Mammary epithelial cell (primary cell): ENCODE measurements at regions of chr18 and their contacts with region 1.

Region 1: DNA sequence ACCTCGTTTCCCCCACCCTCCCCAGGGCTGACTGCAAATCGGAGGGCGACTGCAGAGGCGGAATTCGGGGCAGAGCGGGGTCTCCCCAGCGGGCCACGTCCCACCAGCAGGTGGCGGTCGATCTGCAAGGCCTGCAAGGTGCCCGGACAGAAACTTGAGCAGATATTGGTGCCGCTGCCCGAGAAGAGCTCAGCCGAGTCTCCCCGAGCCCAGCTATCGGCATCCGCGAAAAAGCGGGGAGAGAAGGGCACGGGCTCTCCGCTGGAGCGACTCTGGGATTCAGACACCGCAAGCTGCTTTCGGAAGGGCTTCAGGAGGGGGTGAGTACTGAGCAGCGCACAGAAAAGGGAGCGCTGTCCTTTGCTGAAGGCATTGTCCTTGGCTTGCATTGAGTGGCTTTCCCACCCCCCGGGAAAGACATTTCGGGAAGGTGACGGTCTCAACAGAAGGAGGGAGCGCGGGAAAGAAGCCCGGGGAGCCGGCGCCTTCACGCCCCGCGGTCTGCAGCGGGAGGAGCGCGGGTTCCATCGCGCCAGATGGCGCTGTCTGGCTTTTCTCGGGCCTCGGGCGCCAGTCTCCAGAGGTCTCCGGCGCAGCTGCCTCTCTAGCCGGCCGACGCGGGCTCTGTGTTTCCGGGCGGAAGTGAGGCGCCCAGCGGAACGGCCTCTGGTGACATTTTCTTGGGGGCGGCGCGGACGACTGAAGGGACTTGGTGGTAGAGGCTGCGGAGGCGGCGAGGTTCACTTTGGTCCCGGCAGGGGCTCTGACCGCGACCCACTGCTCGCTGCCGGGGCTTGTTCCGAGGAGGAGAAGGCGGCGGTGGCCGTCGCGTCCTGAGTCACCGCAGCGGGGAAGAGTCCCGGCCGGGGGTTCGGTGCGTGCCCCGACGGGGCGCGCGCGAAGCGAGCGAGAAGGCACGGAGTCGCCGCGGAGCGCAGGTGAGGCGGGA is 69.5 kb downstream of the HAUS1 start:
- DNase-seq: peak; percentile 91
- H3K4me3 ChIP-seq: peak overlapping the region; percentile 63 to 99 (median 67)
- H3K27ac ChIP-seq: peak overlapping the region; percentile 79
- H3K4me1 ChIP-seq: peaks cover 16% of the 10 kb centered on the region
- H3K27me3 ChIP-seq: no peaks in the 10 kb centered on the region
- CTCF ChIP-seq: peak; percentile 74 to 95

Region 2: DNA sequence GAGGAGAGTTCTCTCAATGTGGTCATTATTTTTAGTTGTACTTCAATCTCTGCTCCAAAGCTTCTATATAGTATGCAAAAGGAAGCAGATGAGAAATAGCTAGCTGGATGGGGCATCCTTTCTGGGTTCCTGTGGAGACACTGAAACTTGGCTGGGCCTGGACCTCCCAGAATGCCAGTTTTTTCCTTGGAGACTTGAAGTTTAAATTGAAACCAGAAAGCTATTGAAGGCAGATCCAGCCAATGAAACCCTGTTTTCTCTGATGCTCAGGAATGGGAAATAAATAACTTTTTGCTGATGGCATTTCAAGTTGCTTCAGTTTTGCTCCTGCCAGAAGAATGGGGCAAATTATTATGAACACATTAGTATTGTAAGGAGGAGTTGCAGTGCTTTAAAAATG is 1490.1 kb before region 1 on chr18:
- CTCF ChIA-PET with region 1: no interaction called
- dilution Hi-C with region 1: no loop called
- in situ Hi-C with region 1: no loop called
- intact Hi-C with region 1: no loop called
- DNase-seq: no peak
- H3K4me3 ChIP-seq: no peak overlapping the region
- H3K27ac ChIP-seq: peak overlapping the region; percentile 56
- H3K4me1 ChIP-seq: peaks cover 34% of the 10 kb centered on the region
- H3K27me3 ChIP-seq: no peaks in the 10 kb centered on the region
- CTCF ChIP-seq: no peak

Region 3: DNA sequence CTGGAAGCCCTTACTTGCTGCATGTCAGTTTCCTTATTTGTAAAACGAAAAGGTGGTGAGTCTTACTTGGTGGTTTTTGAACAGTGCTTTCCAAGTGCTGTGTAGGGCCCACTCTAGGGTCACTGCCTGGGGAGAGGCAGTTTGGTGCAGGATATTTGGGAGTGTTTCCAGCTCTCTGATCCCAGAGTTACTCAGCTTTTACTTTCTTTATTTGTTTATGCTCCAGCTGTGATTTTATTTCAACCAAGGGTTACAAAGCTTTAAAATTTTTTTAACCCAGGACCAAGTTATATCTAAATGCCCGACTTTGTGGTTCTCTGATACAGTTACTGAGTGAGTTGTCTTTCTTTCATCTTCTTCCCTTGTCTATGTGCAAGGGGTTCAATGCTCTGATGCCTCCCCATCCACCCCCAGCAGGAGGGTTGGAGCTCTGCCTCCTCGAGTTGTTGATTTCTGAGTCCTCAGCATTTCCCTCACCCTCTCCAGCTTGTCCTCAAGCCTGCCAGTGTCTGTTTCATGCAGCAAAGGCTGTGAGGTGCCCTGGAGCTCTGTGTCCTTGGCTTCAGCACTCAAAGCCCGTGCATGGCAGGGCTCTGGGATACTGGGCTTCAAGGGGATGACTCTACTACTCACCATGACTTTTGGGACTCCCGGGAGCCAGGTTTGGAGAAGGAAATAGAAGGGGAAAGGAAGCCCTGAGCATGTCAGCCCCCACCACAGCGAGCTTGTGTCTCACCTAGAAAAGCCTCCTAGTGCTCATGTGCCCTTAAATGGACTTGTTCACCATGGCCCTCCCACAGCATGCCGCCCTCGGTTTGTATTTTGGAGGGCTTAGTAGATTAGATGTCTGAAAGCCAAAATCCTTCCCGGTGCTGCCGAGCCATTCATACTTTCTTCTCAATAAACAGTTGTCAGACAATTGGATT is 1256.2 kb before region 1 on chr18:
- CTCF ChIA-PET with region 1: no interaction called
- dilution Hi-C with region 1: no loop called
- in situ Hi-C with region 1: no loop called
- intact Hi-C with region 1: no loop called
- DNase-seq: no peak
- H3K4me3 ChIP-seq: no peak overlapping the region
- H3K27ac ChIP-seq: no peak overlapping the region
- H3K4me1 ChIP-seq: peaks cover 22% of the 10 kb centered on the region
- H3K27me3 ChIP-seq: no peaks in the 10 kb centered on the region
- CTCF ChIP-seq: no peak

Region 4: GRCh38 chr18:46097801-46098615 is 75.7 kb before region 1 on chr18 and contains the start of gene ATP5F1A:
- CTCF ChIA-PET with region 1: no interaction called
- dilution Hi-C with region 1: loop called (anchors 10 kb)
- in situ Hi-C with region 1: no loop called
- intact Hi-C with region 1: loop called (anchors 5 kb)
- DNase-seq: peak; percentile 80
- H3K4me3 ChIP-seq: peak within 1 kb of the TSS; percentile 79 to 95 (median 92)
- H3K27ac ChIP-seq: peak within 1 kb of the TSS; percentile 73
- H3K4me1 ChIP-seq: peaks cover 8% of the 10 kb centered on the region
- H3K27me3 ChIP-seq: no peaks in the 10 kb centered on the region
- CTCF ChIP-seq: peak in 1 of 2 donors; percentile 23
- total RNA-seq, gene ATP5F1A: 345 to 516 TPM

Region 5: DNA sequence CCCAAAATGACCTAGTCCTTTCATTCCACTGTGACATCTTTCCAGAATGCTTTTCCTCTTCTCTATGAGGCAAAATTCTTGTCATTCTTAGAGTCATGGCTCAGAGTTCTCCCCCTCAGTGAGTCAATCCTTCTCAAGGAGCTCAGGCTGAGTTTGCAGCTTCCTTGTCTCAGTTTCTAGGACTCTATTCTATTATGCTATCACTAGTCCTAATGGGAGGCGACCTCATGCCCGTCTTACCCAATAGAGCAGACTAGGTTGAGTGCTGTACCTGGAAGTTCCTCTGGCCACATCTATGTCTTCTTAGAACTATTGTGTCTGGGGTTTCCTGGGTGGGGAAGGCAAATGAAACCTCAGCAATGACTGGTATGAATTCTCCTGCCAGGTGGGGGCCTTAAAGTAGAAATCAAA is 18.0 kb before region 1 on chr18:
- CTCF ChIA-PET with region 1: interaction called, 13 read pairs
- dilution Hi-C with region 1: no loop called
- in situ Hi-C with region 1: no loop called
- intact Hi-C with region 1: loop called (anchors 1 kb)
- DNase-seq: peak; percentile 88
- H3K4me3 ChIP-seq: no peak overlapping the region
- H3K27ac ChIP-seq: peak overlapping the region; percentile 78
- H3K4me1 ChIP-seq: peaks cover 73% of the 10 kb centered on the region
- H3K27me3 ChIP-seq: no peaks in the 10 kb centered on the region
- CTCF ChIP-seq: no peak

Region 6: DNA sequence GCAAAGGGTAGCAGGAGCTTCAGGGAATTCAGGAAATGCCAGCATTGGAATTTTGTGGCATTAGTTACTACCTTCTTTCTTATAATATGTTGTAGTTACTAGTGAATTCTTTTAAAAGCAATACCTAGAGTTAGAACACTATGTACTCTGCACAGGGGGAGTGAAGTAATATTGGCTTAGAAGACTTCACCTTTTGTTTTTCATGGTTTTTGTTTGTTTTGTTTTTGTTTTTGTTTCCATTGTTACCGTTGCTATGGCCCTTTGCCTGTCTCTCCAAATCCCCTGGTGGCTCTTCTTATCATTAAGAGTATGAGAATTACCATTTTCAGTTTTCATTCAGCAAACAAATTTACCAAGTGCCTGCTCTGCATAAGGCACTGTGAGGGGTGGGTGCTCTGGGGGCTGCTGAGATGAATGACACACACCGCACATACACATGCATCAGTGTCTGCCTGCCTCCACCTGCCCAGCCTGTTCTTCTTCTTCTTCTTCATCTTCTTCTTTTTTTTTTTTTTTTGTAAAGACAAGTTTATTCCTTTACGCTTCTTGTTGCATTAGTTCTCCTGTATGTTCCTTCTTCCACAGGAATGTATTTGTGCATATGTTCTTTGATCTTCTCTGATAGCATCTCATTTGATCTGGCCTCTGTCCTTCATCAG is 90.7 kb after region 1 on chr18:
- CTCF ChIA-PET with region 1: no interaction called
- dilution Hi-C with region 1: no loop called
- in situ Hi-C with region 1: no loop called
- intact Hi-C with region 1: loop called (anchors 5 kb)
- DNase-seq: peak; percentile 54
- H3K4me3 ChIP-seq: no peak overlapping the region
- H3K27ac ChIP-seq: peak overlapping the region; percentile 62
- H3K4me1 ChIP-seq: peaks cover 47% of the 10 kb centered on the region
- H3K27me3 ChIP-seq: no peaks in the 10 kb centered on the region
- CTCF ChIP-seq: no peak

Region 7: DNA sequence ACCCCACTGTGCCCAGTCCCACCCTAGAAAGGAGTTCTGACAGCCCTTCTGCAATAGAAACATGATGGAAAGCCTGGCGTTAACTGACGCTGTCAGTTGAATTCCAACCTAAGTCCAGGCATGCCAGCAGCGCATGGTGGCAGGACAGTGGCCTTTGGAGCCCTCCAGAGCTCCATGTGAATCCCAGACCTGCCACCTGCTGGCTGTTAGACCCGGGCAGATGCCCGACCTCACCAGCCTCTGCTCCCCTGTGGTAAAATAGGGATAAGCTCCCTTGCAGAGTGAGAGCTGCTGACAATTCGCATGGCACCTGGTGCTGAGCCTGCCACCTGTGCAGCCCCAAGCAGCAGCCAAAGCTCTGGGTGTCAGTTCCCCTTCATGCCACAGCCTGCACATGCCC is 344.8 kb after region 1 on chr18:
- CTCF ChIA-PET with region 1: no interaction called
- dilution Hi-C with region 1: no loop called
- in situ Hi-C with region 1: no loop called
- intact Hi-C with region 1: loop called (anchors 10 kb)
- DNase-seq: peak; percentile 13
- H3K4me3 ChIP-seq: no peak overlapping the region
- H3K27ac ChIP-seq: no peak overlapping the region
- H3K4me1 ChIP-seq: no peaks in the 10 kb centered on the region
- H3K27me3 ChIP-seq: no peaks in the 10 kb centered on the region
- CTCF ChIP-seq: peak in 1 of 2 donors; percentile 53

Region 8: GRCh38 chr18:46660955-46661749 is 487.5 kb after region 1 on chr18:
- CTCF ChIA-PET with region 1: interaction called, 6 read pairs
- dilution Hi-C with region 1: no loop called
- in situ Hi-C with region 1: no loop called
- intact Hi-C with region 1: loop called (anchors 1 kb)
- DNase-seq: no peak
- H3K4me3 ChIP-seq: no peak overlapping the region
- H3K27ac ChIP-seq: no peak overlapping the region
- H3K4me1 ChIP-seq: peaks cover 6% of the 10 kb centered on the region
- H3K27me3 ChIP-seq: no peaks in the 10 kb centered on the region
- CTCF ChIP-seq: no peak